Cardiac septum (tissue), 1 donor: ENCODE measurements at regions of chr3 and their contacts with region 1.

Region 1: DNA sequence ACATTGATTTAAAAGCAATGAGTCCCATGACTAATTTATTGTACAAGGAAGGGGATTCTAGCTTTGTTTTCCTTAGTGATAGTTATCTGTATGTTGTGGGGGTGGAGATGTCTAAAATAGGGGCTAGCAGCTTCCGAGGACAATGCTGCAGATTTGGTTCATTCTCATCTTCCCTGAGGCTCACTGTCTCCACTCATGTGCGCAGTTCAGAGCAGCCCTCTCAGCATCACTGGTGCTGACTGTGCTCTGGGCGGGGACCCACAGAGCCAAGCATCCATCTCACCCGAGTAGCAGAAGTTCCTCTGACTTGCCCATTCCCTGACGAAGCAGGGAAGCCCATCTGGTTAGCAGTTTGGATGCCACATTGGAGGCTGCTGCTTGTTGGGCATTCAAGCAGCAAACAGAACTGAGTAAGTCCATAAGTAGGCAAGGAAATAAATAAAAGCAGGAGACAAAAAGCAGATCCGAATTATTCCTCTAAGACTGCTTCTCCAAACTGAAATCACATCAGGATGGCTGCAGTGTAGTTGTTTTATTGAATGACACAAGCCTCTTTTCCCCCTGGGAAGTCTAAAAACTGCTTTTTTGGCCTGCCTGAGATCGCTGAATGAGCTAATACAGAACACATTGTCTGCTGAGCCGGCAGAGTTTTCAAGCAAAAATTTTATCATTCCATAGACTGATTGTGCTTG is 27.5 kb downstream of the RARB start:
- DNase-seq: no peak

Region 2: GRCh38 chr3:25520926-25521559 is 65.5 kb after region 1 on chr3:
- intact Hi-C with region 1: no loop called
- DNase-seq: no peak

Region 3: GRCh38 chr3:25789596-25790556 is 334.3 kb after region 1 on chr3 and contains the start of gene OXSM:
- intact Hi-C with region 1: loop called (anchors 10 kb)
- DNase-seq: peak; percentile 93
- total RNA-seq, gene OXSM: 11.0 TPM